Naive thymus-derived CD8-positive, alpha-beta T cell (primary cell): ENCODE measurements at regions of chr14 and their contacts with region 1.

Region 1: DNA sequence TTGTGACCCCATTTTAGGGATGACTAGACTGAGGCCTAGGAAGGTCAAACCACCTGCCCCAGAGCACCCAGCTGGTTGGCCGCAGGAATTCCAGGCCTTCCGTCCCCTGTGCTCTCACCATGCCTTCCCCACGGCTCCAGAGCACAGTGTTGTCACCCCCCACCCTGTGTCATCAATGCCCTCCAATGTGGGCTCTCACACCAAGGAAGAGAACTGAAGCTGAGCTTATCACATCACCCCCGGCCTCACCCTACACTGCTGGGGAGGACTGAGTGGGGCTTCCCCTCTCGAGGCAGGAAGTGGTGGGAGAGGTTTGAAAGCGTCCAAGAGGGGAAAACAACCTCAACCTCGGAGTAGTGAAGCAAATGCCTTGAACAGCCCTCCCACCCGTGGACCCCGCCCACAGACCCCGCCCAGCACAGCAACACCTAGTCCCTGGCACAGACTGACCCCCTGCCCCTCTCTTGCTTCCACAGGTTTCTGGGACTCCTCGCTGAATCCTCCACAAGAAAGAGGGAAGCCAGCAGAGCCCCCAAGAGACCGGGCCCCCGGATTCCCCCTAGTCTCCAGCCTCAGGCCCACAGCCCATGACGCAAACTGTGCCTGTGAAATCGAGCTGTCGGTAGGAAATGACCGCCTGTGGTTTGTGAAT is 97.2 kb downstream of the LGMN start:
- DNase-seq: peak; percentile 63 to 94 (median 86)
- ATAC-seq: peak; percentile 79 to 85
- H3K4me3 Mint-ChIP-seq: peak overlapping the region; percentile 98 to 100 (median 100)
- H3K27ac Mint-ChIP-seq: peak overlapping the region; percentile 97 to 100 (median 100)
- H3K4me1 Mint-ChIP-seq: peaks cover 51 to 81% (median 77%) of the 10 kb centered on the region in 4 donors
- H3K27me3 Mint-ChIP-seq: no peaks in the 10 kb centered on the region

Region 2: DNA sequence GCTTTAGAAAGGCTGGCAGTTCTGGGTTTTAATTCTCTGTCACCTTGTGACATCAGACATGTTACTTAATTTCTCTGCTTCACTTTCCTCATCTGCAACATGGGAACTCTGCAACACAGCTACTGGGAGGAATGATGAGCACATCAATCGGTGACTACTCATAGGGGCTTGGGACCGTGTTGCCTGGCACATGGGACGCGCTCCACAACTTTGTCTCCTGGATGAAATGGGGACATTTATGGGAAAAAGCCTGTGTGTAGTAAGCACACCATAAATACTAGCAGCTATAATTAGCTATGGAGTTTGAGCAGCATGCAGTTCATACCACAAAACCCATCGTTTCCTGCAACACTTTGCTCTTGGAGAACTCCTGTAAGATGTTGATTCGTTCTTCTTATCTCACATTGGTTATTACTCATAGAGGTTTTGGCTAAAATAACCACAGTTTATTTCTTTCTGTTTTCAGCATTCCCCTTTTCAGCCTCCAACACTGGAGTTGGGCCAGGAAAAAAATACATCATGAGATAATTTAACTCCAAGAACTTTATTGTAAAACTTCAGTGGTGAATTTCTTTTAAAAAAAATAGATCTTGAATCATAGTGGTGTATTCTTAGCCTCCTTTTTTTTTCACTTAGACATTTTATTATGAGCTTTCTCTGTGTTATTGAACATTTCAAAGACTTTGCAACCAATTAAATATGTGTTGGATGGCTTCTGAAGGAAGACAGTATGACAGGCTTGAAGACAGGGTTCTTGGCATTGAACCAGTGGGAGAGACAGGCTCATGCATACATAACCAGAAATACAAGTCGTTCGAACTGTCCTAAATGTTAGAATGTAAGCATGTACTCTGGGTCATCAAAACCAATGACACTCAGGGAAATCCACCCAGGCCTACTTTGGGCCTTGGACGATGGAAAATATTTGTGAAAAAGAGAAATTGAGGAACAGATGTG is 65.0 kb before region 1 on chr14:
- POLR2A ChIA-PET with region 1: interaction called, 11 read pairs
- DNase-seq: peak in 7 of 10 donors; percentile 24 to 77 (median 72)
- ATAC-seq: peak; percentile 81 to 85
- H3K4me3 Mint-ChIP-seq: peak overlapping the region; percentile 43 to 90 (median 70)
- H3K27ac Mint-ChIP-seq: peak overlapping the region; percentile 91 to 98 (median 95)
- H3K4me1 Mint-ChIP-seq: peaks cover 61 to 98% (median 97%) of the 10 kb centered on the region in 4 donors
- H3K27me3 Mint-ChIP-seq: no peaks in the 10 kb centered on the region

Region 3: DNA sequence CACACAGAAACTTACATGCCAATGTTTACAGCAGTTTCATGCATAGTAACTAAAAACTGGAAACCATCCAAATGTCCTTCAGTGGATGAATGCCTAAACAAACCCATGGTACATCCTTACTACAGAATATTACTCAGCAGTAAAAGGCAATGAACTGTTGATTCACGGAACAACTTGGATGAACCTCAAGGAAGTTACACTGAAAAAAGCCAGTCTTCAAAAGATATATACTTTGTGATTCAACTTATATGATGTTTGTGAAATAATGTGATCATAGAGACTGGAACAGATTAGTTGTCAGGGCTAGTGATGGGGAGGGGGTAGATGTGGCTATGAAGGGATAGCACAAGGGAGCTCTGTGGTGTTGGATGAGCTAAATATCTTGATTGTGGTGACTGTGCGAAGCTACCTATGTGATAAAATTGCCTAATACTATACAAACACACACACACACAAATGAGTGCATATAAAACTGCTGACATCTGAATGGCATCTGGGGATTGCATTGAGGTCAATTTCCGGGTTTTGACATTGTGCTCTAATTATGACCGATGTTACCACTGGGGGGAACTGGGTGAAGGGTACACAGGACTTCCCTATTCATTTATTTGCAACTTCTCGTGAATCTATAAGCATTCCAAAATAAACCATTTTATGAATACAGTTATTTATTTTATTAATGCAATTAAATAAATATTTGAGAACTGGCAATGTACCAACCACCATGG is 43.4 kb before region 1 on chr14:
- POLR2A ChIA-PET with region 1: interaction called, 268 read pairs
- DNase-seq: no peak
- ATAC-seq: no peak
- H3K4me3 Mint-ChIP-seq: no peak overlapping the region
- H3K27ac Mint-ChIP-seq: peak overlapping the region in 1 of 10 donors; percentile 15
- H3K4me1 Mint-ChIP-seq: peaks cover 19 to 50% (median 40%) of the 10 kb centered on the region in 4 donors
- H3K27me3 Mint-ChIP-seq: no peaks in the 10 kb centered on the region

Region 4: DNA sequence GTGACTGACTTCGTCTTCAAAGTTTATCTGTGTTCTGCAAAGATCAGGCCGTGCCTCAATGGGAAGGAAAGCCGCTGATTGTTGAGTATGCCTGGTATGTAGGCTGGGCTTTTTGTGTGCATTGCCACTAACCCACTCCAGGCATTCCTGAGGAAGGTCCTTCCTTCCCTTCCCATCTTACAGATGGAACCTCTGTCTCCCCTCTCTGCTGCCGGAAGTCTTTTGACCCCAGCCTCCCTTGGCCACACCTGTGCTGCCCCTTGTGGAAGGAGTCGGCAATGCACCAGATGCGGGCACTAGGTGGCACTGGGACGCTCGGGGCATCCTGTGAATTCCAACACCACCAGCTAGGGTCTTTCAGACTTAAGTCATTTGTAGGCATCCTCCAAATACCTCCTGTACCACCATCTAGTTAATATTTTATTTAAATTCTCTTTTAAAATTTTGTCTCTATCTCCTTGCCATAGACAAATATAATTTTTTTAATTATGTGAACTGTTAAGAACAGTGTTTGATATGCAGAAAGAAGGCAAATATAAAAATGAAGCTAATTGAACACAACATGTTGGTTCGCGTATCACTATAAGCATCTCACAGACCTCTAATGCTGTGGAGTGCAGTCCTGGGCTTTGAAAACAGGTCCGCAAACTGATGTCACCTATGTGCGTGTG is 38.1 kb before region 1 on chr14:
- POLR2A ChIA-PET with region 1: interaction called, 268 read pairs
- DNase-seq: peak; percentile 47 to 87 (median 70)
- ATAC-seq: peak in 1 of 2 donors; percentile 29
- H3K4me3 Mint-ChIP-seq: peak overlapping the region in 5 of 10 donors; percentile 4 to 52 (median 20)
- H3K27ac Mint-ChIP-seq: peak overlapping the region; percentile 48 to 94 (median 72)
- H3K4me1 Mint-ChIP-seq: peaks cover 28 to 84% (median 72%) of the 10 kb centered on the region in 4 donors
- H3K27me3 Mint-ChIP-seq: no peaks in the 10 kb centered on the region

Region 5: DNA sequence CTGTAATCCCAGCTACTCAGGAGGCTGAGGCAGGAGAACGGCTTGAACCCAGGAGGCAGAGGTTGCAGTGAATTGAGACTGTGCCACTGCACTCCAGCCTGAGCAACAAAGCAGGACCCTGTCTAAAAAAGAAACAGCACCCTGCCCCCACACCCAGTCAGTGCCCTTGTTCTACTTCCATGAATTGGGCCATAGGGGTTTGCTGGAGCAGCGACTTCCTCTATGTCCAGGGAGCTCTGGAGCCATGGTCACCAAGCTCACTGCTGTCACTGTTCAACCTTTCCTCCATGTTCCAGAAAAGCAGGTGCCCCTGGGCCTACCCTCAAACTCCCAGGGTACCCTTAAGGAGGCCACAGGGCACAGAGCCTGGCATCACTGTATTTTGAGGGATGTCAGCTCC is 20.9 kb before region 1 on chr14:
- POLR2A ChIA-PET with region 1: interaction called, 10 read pairs
- DNase-seq: no peak
- ATAC-seq: no peak
- H3K4me3 Mint-ChIP-seq: no peak overlapping the region
- H3K27ac Mint-ChIP-seq: peak overlapping the region in 4 of 10 donors; percentile 2 to 60 (median 38)
- H3K4me1 Mint-ChIP-seq: peaks cover 26 to 34% (median 27%) of the 10 kb centered on the region in 4 donors
- H3K27me3 Mint-ChIP-seq: no peaks in the 10 kb centered on the region

Region 6: GRCh38 chr14:92670160-92670559 is 18.9 kb after region 1 on chr14:
- POLR2A ChIA-PET with region 1: interaction called, 30 read pairs
- DNase-seq: no peak
- ATAC-seq: peak; percentile 22 to 51
- H3K4me3 Mint-ChIP-seq: peak overlapping the region in 1 of 10 donors; percentile 18
- H3K27ac Mint-ChIP-seq: peak overlapping the region; percentile 55 to 92 (median 86)
- H3K4me1 Mint-ChIP-seq: peaks cover 40 to 88% (median 83%) of the 10 kb centered on the region in 4 donors
- H3K27me3 Mint-ChIP-seq: no peaks in the 10 kb centered on the region

Region 7: DNA sequence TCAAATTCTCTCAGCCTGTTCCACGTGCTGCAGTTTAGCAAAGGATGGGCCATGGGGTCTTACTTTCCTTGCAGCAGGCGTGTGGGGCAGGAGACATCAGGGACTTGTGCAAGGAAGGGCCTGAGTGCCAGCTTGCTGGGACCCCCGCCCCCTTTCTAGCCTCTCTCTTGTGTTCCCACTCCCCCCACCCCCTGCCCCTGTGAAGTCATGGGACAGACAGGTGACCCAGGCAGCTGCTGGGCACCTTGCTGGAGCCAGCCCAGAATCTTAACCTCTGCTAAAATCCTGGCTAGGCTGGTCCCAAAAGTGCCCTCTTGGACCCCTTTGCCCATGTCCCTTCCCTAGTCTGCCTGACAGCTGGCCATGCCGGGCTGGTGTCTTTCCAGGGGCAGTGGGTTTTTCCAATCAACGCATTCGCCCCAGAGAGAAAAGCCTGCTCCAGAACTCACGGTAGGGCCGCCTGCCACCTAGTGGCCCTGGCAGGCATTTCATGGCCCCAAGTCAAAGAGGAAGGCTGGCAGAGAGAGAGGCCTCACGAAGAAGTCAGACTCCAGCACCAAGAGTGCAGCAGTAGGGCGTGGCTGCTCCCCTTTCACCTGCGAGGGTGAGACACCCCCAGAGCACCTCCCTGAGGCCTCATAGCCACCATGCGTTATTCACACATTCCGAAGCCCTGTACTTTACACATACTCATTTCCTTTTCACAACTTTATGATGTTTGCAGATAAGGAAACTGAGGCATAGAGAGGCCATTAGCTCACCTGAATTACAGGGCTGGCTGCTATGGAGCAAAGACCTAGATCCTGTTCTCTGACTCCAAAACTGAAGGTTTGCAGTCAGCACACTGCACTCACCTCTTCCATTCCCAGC is 29.8 kb after region 1 on chr14:
- POLR2A ChIA-PET with region 1: interaction called, 26 read pairs
- DNase-seq: peak; percentile 60 to 84 (median 74)
- ATAC-seq: peak; percentile 80
- H3K4me3 Mint-ChIP-seq: peak overlapping the region in 3 of 10 donors; percentile 28 to 43 (median 41)
- H3K27ac Mint-ChIP-seq: peak overlapping the region; percentile 83 to 94 (median 90)
- H3K4me1 Mint-ChIP-seq: peaks cover 19 to 52% (median 31%) of the 10 kb centered on the region in 4 donors
- H3K27me3 Mint-ChIP-seq: no peaks in the 10 kb centered on the region

Region 8: GRCh38 chr14:92728759-92729370 is 77.6 kb after region 1 on chr14:
- POLR2A ChIA-PET with region 1: no interaction called
- DNase-seq: no peak
- ATAC-seq: no peak
- H3K4me3 Mint-ChIP-seq: no peak overlapping the region
- H3K27ac Mint-ChIP-seq: no peak overlapping the region
- H3K4me1 Mint-ChIP-seq: peaks cover 0 to 14% (median 6%) of the 10 kb centered on the region in 4 donors
- H3K27me3 Mint-ChIP-seq: peaks cover 0 to 3% (median 0%) of the 10 kb centered on the region in 5 donors

Region 9: GRCh38 chr14:92755495-92755894 is 104.3 kb after region 1 on chr14:
- POLR2A ChIA-PET with region 1: no interaction called
- DNase-seq: no peak
- ATAC-seq: no peak
- H3K4me3 Mint-ChIP-seq: no peak overlapping the region
- H3K27ac Mint-ChIP-seq: no peak overlapping the region
- H3K4me1 Mint-ChIP-seq: peaks cover 13 to 31% (median 23%) of the 10 kb centered on the region in 4 donors
- H3K27me3 Mint-ChIP-seq: peaks cover 0 to 2% (median 0%) of the 10 kb centered on the region in 5 donors